CD8-positive, alpha-beta T cell (primary cell): ENCODE measurements at regions of chr10 and their contacts with region 1.

Region 1: DNA sequence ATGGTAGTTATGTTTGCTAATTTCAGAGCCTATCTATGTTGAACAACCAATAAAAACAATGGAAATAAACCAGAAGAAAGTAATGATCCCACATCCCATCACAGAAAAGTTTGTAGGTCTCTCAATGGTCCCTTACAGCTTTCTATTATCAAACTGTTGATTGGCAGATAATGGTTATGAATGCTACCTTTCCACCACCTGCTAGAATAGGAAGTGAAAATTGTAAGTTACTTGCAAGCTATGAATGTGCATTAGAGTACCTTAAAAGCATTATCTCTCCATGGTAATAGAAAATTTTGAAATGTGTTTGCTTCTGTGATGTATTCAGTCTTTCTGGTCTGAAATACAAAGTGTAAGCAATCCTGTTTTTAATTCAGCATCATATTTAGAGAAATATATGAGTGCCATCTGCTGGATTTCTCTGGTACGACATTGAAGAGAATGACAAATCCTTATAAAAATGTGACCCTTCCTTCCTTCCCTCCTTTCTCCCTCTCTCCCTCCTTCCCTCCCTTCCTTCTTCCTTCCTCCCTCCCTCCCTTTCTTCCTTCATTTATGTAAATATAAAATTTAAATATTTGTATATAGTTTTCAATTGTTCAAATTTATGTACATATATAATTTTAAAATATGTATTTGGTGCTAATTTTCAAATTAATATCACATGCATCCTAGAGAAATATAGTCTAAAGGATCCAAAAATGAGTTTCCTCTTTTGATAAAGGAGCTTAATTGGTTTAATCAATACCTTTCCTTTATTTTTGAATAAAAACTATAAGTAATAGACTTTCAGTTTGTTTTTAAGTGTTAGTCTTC is 41.4 kb upstream of the PNLIPRP3 start:
- DNase-seq: peak in 2 of 9 experiments; percentile 7 to 26
- ATAC-seq: no peak
- H3K4me3 ChIP-seq: no peak overlapping the region
- H3K4me3 Mint-ChIP-seq: no peak overlapping the region
- H3K27ac ChIP-seq: no peak overlapping the region
- H3K27ac Mint-ChIP-seq: no peak overlapping the region
- H3K4me1 ChIP-seq: no peaks in the 10 kb centered on the region
- H3K4me1 Mint-ChIP-seq: no peaks in the 10 kb centered on the region
- H3K27me3 ChIP-seq: no peaks in the 10 kb centered on the region
- H3K27me3 Mint-ChIP-seq: peaks cover 3% of the 10 kb centered on the region
- CTCF ChIP-seq: peak; percentile 57

Region 2: GRCh38 chr10:114876602-114877300 is 1509.5 kb before region 1 on chr10:
- CTCF ChIA-PET with region 1: no interaction called
- POLR2A ChIA-PET with region 1: no interaction called
- intact Hi-C with region 1: loop called in 1 of 2 experiments (anchors 5 kb)
- DNase-seq: peak in 4 of 9 experiments; percentile 2 to 42 (median 18)
- ATAC-seq: no peak
- H3K4me3 ChIP-seq: no peak overlapping the region
- H3K4me3 Mint-ChIP-seq: no peak overlapping the region
- H3K27ac ChIP-seq: no peak overlapping the region
- H3K27ac Mint-ChIP-seq: no peak overlapping the region
- H3K4me1 ChIP-seq: no peaks in the 10 kb centered on the region
- H3K4me1 Mint-ChIP-seq: peaks cover 10% of the 10 kb centered on the region
- H3K27me3 ChIP-seq: peaks cover 0 to 2% of the 10 kb centered on the region in 2 experiments
- H3K27me3 Mint-ChIP-seq: peaks cover 38% of the 10 kb centered on the region
- CTCF ChIP-seq: peak; percentile 36

Region 3: GRCh38 chr10:115171392-115171960 is 1214.7 kb before region 1 on chr10:
- CTCF ChIA-PET with region 1: no interaction called
- POLR2A ChIA-PET with region 1: no interaction called
- intact Hi-C with region 1: loop called in 1 of 2 experiments (anchors 5 kb)
- DNase-seq: no peak
- ATAC-seq: no peak
- H3K4me3 ChIP-seq: no peak overlapping the region
- H3K4me3 Mint-ChIP-seq: no peak overlapping the region
- H3K27ac ChIP-seq: no peak overlapping the region
- H3K27ac Mint-ChIP-seq: no peak overlapping the region
- H3K4me1 ChIP-seq: no peaks in the 10 kb centered on the region
- H3K4me1 Mint-ChIP-seq: no peaks in the 10 kb centered on the region
- H3K27me3 ChIP-seq: no peaks in the 10 kb centered on the region
- H3K27me3 Mint-ChIP-seq: peaks cover 5% of the 10 kb centered on the region
- CTCF ChIP-seq: no peak

Region 4: DNA sequence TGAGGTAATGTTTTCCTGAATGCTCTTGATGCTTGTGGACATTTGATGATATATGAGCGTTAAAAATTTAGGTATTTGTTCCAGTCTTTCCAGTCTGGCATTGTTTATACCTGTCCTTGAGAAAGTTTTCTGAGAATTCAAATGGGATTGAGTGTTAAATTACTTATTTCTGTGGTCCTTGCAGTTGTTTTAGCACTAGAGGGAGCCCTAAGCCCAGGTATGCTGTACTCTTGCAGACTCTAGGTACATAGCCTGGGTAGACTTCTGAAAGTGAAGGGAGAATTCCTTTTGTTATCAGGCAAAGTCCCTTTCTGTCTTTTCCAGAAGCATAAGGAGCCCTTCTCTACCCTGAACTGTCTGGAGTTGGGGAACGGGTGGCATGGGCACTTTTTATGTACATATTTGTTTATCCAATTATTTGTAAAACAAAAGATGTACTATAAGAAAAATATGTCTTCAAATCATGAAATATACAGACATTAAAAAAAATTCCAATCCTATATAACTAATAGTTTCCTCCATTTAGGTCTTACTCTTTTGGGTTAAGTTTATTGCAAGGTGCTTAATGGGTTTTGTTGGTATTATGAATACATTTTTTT is 1030.9 kb before region 1 on chr10:
- CTCF ChIA-PET with region 1: no interaction called
- POLR2A ChIA-PET with region 1: no interaction called
- intact Hi-C with region 1: loop called (anchors 5 to 10 kb)
- DNase-seq: peak in 2 of 9 experiments; percentile 7 to 37
- ATAC-seq: no peak
- H3K4me3 ChIP-seq: no peak overlapping the region
- H3K4me3 Mint-ChIP-seq: no peak overlapping the region
- H3K27ac ChIP-seq: no peak overlapping the region
- H3K27ac Mint-ChIP-seq: no peak overlapping the region
- H3K4me1 ChIP-seq: no peaks in the 10 kb centered on the region
- H3K4me1 Mint-ChIP-seq: no peaks in the 10 kb centered on the region
- H3K27me3 ChIP-seq: no peaks in the 10 kb centered on the region
- H3K27me3 Mint-ChIP-seq: no peaks in the 10 kb centered on the region
- CTCF ChIP-seq: no peak